K562 (cell line): ENCODE measurements at regions of chr11 and their contacts with region 1.

Region 1: DNA sequence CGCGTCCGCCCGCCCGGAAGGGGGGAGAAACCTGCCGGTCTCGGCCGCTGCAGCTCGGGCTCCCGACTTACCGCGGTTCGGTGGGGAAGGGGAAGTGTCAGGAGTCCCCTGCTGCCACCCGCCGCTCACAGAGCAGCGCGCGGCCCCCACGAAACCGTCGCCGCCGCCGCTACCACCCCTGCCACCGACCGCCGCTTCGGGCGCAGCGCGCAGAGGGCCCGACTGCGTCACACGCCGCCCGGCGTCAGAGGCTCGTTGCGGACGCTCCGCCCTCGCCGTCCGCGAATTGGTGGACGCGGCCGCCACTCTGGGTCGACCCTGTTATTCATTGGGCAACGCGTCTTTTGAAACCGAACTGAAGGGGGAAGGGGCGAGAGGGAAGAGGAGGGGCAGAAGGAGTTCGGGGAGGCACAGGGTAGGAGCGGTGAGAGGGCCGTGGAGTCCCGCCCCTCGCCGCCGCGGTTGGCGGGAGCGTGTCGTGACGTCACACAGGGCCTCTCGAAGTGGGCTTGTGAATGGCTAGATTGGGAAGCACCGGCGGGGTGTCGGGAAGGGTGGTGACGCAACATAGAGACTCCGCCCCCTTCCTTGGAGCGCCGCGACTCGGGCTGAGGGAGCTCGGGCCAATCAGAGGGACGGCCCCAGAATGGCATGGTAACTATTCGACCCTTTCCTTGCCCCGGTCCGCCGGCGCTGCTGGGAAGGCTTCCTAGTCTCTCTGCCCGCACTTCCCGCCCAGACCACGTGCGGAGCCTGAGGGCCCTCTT is at the start of gene NUP98:
- DNase-seq: peak; percentile 97 to 100 (median 98)
- ATAC-seq: peak; percentile 95
- H3K4me3 ChIP-seq: peak within 1 kb of the TSS; percentile 86
- H3K27ac ChIP-seq: peak within 1 kb of the TSS; percentile 94
- H3K4me1 ChIP-seq: peaks cover 12 to 22% of the 10 kb centered on the region in 2 experiments
- H3K27me3 ChIP-seq: no peaks in the 10 kb centered on the region
- CTCF ChIP-seq: no peak
- EP300 ChIP-seq: no peak; the same call in 1 of the 2 replicates
- POLR2A ChIP-seq: peak; percentile 93
- RAD21 ChIP-seq: no peak
- polyA plus RNA-seq, gene NUP98: 45.1 to 60.8 TPM

Region 2: GRCh38 chr11:3783611-3784010 is 13.9 kb before region 1 on chr11:
- CTCF ChIA-PET with region 1: no interaction called
- POLR2A ChIA-PET with region 1: interaction called, 11 read pairs
- in situ Hi-C with region 1: no loop called
- intact Hi-C with region 1: no loop called
- DNase-seq: no peak
- ATAC-seq: no peak
- H3K4me3 ChIP-seq: no peak overlapping the region
- H3K27ac ChIP-seq: no peak overlapping the region
- H3K4me1 ChIP-seq: peaks cover 8 to 11% of the 10 kb centered on the region in 2 experiments; a peak in 4 of 5 replicates
- H3K27me3 ChIP-seq: no peaks in the 10 kb centered on the region
- CTCF ChIP-seq: no peak
- EP300 ChIP-seq: no peak
- POLR2A ChIP-seq: no peak
- RAD21 ChIP-seq: no peak

Region 3: DNA sequence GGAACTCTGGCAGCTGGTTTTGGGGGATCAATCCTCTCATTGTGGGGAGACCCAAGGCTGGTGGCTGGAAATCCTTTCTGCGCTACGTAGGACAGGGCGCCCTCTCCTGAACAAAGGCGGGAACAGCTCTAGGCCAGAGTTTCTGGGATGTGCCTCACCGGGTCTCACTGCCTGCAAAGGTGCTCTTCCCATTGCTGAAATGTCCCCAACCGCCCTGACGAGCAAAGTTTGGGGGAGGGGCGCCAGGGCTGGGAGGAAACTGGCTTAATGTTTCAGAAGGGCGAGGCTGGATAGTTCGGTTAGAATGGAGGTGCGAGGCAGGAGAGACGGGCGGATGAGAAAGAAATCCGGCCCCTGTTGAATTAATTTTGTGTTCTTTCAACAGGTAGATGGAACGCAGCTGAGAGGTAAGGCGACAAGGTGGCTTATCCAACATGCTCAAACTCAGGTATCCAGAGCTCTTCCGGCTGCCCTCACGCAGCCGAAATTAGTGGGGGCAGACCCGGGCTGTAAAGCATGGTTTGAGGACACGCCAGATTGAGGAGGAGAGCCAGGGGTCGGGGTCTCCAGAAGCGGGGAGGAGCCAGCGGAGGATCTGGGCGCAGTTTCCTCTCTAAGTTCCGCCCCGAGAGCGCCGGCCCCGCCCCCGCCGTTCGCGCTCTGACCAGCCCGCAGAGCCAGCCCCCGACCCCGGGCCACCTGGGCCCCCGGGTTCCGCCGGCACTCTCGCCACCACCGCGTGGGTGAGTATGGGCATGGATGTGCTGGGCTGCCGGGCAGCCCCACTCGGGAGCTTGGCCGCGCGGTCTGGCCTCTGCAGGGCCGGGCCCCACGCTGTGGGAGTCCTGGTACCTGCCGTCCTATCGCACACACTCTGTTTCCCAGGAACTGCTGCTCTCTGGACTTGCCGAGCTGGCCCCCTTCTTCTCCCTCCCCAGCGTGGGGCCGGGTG is 10.7 kb after region 1 on chr11 and contains the start of gene PGAP2:
- CTCF ChIA-PET with region 1: interaction called, 5 read pairs
- POLR2A ChIA-PET with region 1: interaction called, 22 read pairs
- in situ Hi-C with region 1: no loop called
- intact Hi-C with region 1: no loop called
- DNase-seq: peak; percentile 85 to 88 (median 88)
- ATAC-seq: peak; percentile 91
- H3K4me3 ChIP-seq: peak within 1 kb of the TSS; percentile 56
- H3K27ac ChIP-seq: peak within 1 kb of the TSS; percentile 75
- H3K4me1 ChIP-seq: peaks cover 7 to 19% of the 10 kb centered on the region in 2 experiments; a peak in 3 of 5 replicates
- H3K27me3 ChIP-seq: no peaks in the 10 kb centered on the region
- CTCF ChIP-seq: peak; percentile 80 to 92 (median 85)
- EP300 ChIP-seq: peak; percentile 38; the same call in 1 of the 2 replicates
- POLR2A ChIP-seq: peak; percentile 46
- RAD21 ChIP-seq: peak; percentile 47 to 74
- polyA plus RNA-seq, gene PGAP2: 33.7 to 40.0 TPM

Region 4: DNA sequence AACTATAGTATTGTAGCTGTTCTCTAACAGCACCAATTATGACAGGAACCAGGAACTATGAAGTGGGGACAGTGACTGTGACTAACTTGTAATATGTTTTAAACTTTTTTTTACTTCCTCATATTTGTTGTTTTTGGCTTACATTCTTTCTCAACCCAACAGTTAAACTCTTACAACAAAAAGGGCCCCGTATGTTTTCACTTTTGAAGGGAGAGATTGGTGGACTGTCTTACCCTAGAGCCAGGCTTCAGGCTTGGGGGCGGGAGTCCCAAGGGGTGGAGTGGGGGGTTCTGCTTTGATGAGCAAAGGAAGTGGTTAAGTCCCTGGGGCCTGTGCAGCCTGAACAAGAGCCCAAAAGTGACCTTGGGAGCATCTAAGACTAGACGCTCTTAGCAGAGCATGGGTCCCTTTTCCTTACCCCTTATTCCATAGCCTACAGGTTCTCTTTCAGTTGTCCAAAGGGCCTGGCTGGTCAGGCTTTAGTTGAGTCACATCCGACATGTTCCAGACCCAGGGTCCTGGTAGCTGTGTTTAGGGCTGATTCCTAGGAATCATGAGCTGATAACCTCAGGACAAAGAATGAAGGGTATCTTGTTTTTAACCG is 96.7 kb after region 1 on chr11:
- CTCF ChIA-PET with region 1: no interaction called
- POLR2A ChIA-PET with region 1: no interaction called
- in situ Hi-C with region 1: no loop called
- intact Hi-C with region 1: no loop called
- DNase-seq: peak in 2 of 4 experiments; percentile 44 to 56
- ATAC-seq: peak; percentile 79
- H3K4me3 ChIP-seq: no peak overlapping the region
- H3K27ac ChIP-seq: peak overlapping the region; percentile 70
- H3K4me1 ChIP-seq: peaks cover 19 to 38% of the 10 kb centered on the region in 2 experiments
- H3K27me3 ChIP-seq: no peaks in the 10 kb centered on the region
- CTCF ChIP-seq: no peak
- EP300 ChIP-seq: no peak
- POLR2A ChIP-seq: no peak
- RAD21 ChIP-seq: no peak